Tibial artery (tissue), 4 donors: ENCODE measurements at regions of chr3 and their contacts with region 1.

Region 1: GRCh38 chr3:98593046-98593936 is at the start of gene CPOX:
- DNase-seq: peak; percentile 91 to 92
- H3K4me3 ChIP-seq: peak within 1 kb of the TSS; percentile 77 to 90
- H3K27ac ChIP-seq: peak within 1 kb of the TSS; percentile 78 to 92
- H3K4me1 ChIP-seq: peaks cover 0 to 19% (median 10%) of the 10 kb centered on the region in 4 donors
- H3K27me3 ChIP-seq: no peaks in the 10 kb centered on the region
- CTCF ChIP-seq: no peak

Region 2: DNA sequence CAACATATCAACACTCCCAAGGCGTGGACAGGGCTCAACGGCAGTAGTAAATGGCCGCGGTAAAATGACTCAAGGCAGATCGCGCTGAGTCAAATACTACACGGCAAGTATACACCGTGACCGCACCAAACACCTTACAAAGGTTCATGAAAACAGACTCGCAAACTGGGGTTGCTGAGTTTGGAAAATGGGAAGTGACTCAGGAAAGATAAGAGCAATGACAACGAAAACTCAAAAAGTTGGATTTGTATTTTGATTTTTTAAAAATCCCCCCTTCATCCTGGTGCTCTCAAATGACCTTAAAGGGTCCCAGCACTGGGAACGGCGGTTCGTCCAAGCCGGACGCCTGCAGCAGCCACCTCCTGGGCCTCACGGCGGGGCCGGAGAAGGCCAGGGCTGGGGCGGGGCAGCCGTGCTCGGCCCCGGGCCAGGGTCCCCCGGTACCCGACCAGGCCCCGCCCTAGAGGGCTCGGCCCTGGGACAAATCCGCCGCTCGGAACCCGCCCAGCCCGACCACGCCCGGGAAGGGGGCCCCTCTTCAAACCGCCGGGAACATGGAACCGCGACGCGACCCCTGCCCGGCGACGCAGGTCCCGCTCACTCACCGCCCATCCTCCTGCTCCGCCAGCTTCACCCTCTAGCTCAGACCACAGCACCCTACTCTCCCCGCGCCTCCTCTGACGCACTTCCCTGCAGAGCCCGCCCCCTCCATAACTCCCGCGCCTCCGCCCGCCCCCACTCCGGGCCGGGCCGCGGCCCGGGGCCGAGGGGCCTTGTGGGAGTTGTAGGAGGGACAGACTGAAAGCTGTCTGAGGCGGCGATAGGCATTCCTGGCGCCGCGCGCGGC is 70.8 kb before region 1 on chr3 and contains the start of gene CLDND1:
- intact Hi-C with region 1: loop called (anchors 5 kb)
- DNase-seq: peak; percentile 98 to 99
- H3K4me3 ChIP-seq: peak within 1 kb of the TSS; percentile 76 to 95
- H3K27ac ChIP-seq: peak within 1 kb of the TSS; percentile 90 to 98
- H3K4me1 ChIP-seq: peaks cover 0 to 35% (median 14%) of the 10 kb centered on the region in 4 donors
- H3K27me3 ChIP-seq: no peaks in the 10 kb centered on the region
- CTCF ChIP-seq: no peak

Region 3: DNA sequence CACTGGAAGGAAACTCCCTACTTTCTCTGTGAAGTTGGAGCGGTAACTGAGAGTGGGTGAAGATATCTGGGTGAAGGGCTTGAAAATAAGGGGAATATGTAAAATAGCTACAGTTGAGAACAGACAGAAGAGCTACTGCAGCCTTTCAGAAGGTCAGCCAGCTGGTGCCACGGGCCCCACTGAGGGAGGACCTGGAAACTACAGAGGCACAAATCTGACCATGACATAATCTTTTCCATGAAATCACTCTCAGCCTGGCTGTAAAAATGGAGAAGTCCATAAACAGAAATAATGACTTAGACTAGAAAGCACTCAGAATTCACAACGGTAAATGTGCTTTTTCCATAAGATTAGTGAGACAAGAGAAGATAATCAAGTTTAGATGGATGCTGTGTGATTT is 216.3 kb after region 1 on chr3:
- intact Hi-C with region 1: loop called (anchors 2 kb)
- DNase-seq: no peak
- H3K4me3 ChIP-seq: no peak overlapping the region
- H3K27ac ChIP-seq: no peak overlapping the region
- H3K4me1 ChIP-seq: peaks cover 0 to 8% (median 0%) of the 10 kb centered on the region in 4 donors
- H3K27me3 ChIP-seq: no peaks in the 10 kb centered on the region
- CTCF ChIP-seq: no peak

Region 4: DNA sequence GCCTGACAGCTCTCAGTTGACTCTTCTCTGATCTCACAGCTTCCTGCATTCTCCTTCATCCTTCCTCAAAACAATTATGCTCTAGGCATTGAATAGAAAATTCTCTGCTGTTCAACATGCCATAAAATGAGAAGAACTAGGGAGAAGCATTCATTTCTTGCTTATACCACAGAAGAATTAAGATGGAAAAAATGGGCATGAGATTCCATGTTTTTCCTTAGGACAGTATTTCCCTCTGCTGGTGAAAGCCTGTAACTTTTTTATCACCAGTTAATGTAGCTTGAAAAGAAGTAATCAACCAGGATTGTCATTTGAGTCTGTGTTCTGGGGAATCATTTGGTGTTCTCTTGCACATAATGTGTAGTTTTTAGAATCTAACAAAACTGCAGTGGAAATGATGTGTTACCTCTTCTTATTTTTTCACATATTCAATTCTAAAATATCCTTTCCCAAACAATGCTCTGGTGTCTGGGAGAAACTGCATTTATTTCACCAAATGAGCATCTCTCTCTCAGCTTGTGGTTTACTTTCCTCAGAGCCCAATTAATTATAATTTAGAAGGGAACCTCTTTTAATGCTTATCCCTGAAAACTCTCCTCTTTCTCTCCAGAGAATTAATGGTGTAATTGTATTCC is 401.0 kb after region 1 on chr3:
- intact Hi-C with region 1: loop called (anchors 10 kb)
- DNase-seq: no peak
- H3K4me3 ChIP-seq: no peak overlapping the region
- H3K27ac ChIP-seq: no peak overlapping the region
- H3K4me1 ChIP-seq: no peaks in the 10 kb centered on the region
- H3K27me3 ChIP-seq: no peaks in the 10 kb centered on the region
- CTCF ChIP-seq: peak; percentile 75 to 85